Heart left ventricle (tissue), 16 donors: ENCODE measurements at regions of chr12 and their contacts with region 1.

Region 1: DNA sequence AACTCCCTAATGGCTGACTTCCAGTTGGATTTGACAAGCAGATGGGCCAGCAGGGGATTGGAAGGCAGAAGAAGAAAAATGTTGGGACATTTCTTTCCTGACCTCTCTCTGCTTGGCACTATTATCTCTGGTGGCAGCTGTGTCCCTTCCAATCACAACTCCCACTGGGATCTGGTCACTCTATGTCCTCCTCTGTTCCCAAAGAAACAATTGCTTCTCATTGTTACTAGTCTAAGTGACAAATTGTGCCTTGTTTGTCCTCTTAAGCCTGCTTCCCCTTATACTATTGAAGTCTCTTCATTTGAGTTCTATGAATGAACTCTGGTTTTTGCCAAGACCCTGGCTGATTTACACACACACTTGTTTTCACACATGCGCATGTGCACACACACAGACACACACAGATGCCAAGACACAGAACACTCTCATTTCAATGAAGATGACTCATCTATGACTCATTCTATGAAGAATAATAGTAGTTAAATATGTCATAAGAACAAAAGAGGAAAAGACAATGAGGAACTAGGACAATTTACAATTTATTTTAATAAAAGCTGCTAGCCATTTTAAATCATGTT is 83.0 kb upstream of the FAR2 start:
- DNase-seq: peak in 2 of 5 donors; percentile 26 to 29
- ATAC-seq: peak in 1 of 4 donors; percentile 68
- H3K4me3 ChIP-seq: no peak overlapping the region
- H3K27ac ChIP-seq: no peak overlapping the region
- H3K4me1 ChIP-seq: peaks cover 0 to 8% (median 0%) of the 10 kb centered on the region in 12 donors
- H3K27me3 ChIP-seq: no peaks in the 10 kb centered on the region
- CTCF ChIP-seq: no peak
- POLR2A ChIP-seq: no peak

Region 2: GRCh38 chr12:29103539-29103974 is 37.5 kb after region 1 on chr12:
- intact Hi-C with region 1: loop called in 1 of 10 experiments (anchors 2 kb)
- DNase-seq: no peak
- ATAC-seq: peak in 2 of 4 donors; percentile 41 to 49
- H3K4me3 ChIP-seq: peak overlapping the region in 1 of 12 donors; percentile 33
- H3K27ac ChIP-seq: peak overlapping the region in 1 of 12 donors; percentile 82
- H3K4me1 ChIP-seq: peaks cover 0 to 29% (median 0%) of the 10 kb centered on the region in 12 donors
- H3K27me3 ChIP-seq: no peaks in the 10 kb centered on the region
- CTCF ChIP-seq: no peak
- POLR2A ChIP-seq: no peak

Region 3: DNA sequence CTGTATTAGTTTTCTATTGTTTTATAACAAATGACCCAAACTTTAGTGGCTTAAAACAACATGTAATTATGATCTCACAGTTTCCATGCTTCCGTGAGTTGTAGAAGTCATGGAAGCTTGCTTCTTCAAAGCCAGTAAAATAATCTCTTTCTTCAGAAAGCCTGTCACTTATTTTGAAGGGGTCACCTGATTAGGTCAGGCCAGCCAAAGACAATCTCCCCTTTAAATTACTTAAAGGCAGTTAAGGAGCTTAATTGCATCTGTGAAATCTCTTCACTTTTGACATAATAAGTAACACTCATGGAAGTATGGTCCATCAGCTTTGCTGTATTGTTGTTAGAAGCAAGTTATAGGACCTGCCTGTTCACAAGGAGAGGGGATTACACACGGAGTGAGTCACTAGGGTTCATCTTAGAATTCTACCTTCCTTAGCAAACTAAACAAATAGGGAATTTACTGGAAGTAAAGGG is 172.8 kb after region 1 on chr12:
- intact Hi-C with region 1: no loop called
- DNase-seq: no peak
- ATAC-seq: no peak
- H3K4me3 ChIP-seq: no peak overlapping the region
- H3K27ac ChIP-seq: no peak overlapping the region
- H3K4me1 ChIP-seq: peaks cover 0 to 28% (median 17%) of the 10 kb centered on the region in 12 donors
- H3K27me3 ChIP-seq: no peaks in the 10 kb centered on the region
- CTCF ChIP-seq: no peak
- POLR2A ChIP-seq: no peak